ENCODE measurements at regions of chr21 and their contacts with region 1.

Region 1: DNA sequence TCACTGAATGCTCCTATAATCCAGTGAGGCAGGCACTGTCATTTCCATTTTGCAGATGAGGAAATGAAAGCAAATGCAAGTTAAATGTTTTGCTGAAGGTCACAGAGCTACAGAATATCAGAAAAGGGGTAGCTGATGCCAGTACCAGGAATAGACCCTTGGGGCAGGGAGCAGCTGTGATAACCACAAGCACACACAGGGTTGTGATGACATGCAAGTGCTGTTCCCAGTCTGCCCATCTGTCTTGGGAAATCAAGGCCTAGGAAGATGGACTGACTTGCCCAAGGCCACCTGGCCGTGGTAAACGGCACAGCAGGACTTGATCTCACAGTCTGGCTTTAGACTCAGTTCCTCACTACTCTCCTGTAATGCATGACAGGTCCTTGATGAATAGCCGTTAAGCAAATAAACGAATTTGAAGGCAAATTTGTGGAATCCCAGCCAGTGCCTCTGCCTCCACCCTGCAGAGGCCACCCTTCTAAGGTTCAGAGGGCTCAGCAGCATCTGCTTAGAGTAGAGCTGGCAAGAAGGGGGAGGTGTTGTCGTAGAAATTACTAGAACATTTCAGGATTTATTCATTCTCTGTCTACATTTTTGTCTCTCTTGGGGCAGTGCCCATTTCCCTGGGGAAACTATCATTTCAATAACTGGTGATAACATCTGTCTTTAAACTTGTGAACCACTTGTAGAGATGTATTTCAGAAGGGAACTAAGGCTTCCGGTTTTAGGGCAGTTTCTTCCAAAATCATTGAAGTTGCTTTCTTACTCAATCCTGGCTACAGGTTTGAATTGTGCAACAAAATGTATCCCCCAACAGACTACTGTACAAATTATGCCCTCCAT is 53.2 kb upstream of the MRPS6 start:
- DNase-seq: no peak
- H3K4me3 ChIP-seq: no peak overlapping the region
- H3K27ac ChIP-seq: peak overlapping the region in 1 of 4 donors; percentile 28
- H3K4me1 ChIP-seq: peaks cover 0 to 27% (median 21%) of the 10 kb centered on the region in 4 donors
- H3K27me3 ChIP-seq: no peaks in the 10 kb centered on the region
- CTCF ChIP-seq: no peak
- EP300 ChIP-seq: no peak
- POLR2A ChIP-seq: no peak

Region 2: GRCh38 chr21:33947451-33948095 is 72.7 kb before region 1 on chr21:
- intact Hi-C with region 1: loop called (anchors 5 kb)
- DNase-seq: peak; percentile 96
- H3K4me3 ChIP-seq: peak overlapping the region in 3 of 4 donors; percentile 19 to 26 (median 21)
- H3K27ac ChIP-seq: peak overlapping the region; percentile 82 to 94 (median 88)
- H3K4me1 ChIP-seq: peaks cover 0 to 33% (median 31%) of the 10 kb centered on the region in 4 donors
- H3K27me3 ChIP-seq: no peaks in the 10 kb centered on the region
- CTCF ChIP-seq: no peak
- EP300 ChIP-seq: peak in 2 of 4 donors; percentile 12 to 92
- POLR2A ChIP-seq: no peak

Region 3: DNA sequence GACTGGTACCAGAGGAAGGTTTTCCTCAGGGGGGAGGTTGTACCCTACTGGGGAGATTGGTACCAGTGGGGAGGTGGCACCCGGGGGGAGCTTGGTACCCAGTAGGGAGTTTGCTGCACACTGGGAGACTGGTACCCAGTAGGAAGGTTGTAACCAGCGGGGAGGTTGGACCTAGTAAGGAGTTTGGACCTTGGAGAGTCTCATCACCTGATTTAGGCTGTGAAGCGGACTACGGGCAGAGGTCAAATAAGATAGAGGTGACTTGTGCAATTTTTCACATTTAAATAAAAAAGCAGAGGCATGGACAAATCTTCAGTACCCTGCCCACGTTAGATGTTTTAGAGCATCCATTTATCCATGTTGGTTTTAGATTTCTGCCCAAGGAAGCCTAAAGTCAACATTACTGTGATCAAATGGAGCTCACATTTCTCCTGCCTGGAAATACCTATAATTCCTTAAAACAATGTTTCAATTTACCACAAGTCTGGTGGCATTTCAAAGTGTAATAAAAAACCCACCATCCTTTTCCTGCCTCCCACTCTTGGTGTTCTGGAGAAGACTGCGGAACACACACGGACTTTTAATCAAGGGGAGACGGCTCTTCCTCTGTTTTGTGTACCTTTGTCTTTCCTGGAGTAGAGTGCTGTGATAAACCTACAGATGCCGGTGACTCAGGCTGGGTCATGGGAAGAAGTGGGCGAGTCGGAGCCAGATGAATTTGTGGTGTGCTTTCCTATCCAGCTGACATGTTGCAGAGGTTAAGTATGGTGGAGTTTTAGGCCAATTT is 17.0 kb after region 1 on chr21:
- intact Hi-C with region 1: no loop called
- DNase-seq: no peak
- H3K4me3 ChIP-seq: no peak overlapping the region
- H3K27ac ChIP-seq: no peak overlapping the region
- H3K4me1 ChIP-seq: no peaks in the 10 kb centered on the region
- H3K27me3 ChIP-seq: no peaks in the 10 kb centered on the region
- CTCF ChIP-seq: no peak
- EP300 ChIP-seq: no peak
- POLR2A ChIP-seq: no peak

Region 4: GRCh38 chr21:34078915-34079314 is 58.7 kb after region 1 on chr21:
- intact Hi-C with region 1: loop called (anchors 5 kb)
- DNase-seq: no peak
- H3K4me3 ChIP-seq: no peak overlapping the region
- H3K27ac ChIP-seq: peak overlapping the region in 1 of 4 donors; percentile 13
- H3K4me1 ChIP-seq: peaks cover 0 to 89% (median 81%) of the 10 kb centered on the region in 4 donors
- H3K27me3 ChIP-seq: no peaks in the 10 kb centered on the region
- CTCF ChIP-seq: no peak
- EP300 ChIP-seq: no peak
- POLR2A ChIP-seq: no peak